ENCODE measurements at regions of chr6 and their contacts with region 1.

Region 1: GRCh38 chr6:106787327-106788196 is 158.2 kb downstream of the QRSL1 start:
- DNase-seq: no peak
- H3K4me3 ChIP-seq: no peak overlapping the region
- H3K27ac ChIP-seq: no peak overlapping the region
- H3K4me1 ChIP-seq: peaks cover 0 to 4% of the 10 kb centered on the region in 2 donors
- H3K27me3 ChIP-seq: no peaks in the 10 kb centered on the region
- CTCF ChIP-seq: no peak
- POLR2A ChIP-seq: no peak

Region 2: DNA sequence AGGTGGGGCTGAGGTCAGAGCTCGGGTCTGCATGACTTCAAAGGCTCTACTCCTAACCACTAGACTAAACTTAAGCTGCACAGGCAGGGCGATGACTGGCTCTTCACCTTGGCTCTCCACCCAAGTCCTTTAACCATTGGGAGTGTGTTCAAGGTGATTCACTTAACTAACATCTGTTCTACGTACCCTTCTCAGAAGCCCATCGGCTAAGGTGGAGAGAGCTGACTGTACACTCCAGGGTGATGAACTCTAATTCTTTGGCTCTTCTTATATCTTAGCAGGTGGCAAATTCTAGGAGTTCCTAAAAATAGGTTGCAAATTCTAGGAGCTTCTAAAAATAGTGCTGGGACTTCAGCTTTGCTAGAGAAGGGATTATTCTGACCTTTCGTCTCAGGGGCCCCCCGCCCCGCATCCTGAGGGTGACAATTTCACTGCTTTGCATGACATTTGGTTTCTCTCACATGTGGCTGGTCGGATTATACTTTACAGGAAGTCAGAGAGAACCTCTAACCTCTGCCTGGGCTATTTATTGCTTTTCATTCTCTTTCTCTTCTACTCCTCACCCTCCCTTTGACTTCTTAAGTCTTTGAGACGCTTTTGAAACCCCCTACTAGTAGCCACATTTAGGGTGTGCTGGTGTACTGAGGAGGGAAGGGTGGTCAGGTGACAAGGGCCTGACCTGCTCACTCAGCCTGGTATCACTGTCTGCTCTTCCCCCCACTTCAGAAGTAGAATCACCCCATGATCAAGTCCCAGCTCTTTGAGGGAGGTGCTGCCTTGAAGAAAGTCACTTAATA is 645.9 kb before region 1 on chr6:
- intact Hi-C with region 1: no loop called
- DNase-seq: no peak
- H3K4me3 ChIP-seq: no peak overlapping the region
- H3K27ac ChIP-seq: no peak overlapping the region
- H3K4me1 ChIP-seq: no peaks in the 10 kb centered on the region
- H3K27me3 ChIP-seq: no peaks in the 10 kb centered on the region
- CTCF ChIP-seq: no peak
- POLR2A ChIP-seq: no peak

Region 3: DNA sequence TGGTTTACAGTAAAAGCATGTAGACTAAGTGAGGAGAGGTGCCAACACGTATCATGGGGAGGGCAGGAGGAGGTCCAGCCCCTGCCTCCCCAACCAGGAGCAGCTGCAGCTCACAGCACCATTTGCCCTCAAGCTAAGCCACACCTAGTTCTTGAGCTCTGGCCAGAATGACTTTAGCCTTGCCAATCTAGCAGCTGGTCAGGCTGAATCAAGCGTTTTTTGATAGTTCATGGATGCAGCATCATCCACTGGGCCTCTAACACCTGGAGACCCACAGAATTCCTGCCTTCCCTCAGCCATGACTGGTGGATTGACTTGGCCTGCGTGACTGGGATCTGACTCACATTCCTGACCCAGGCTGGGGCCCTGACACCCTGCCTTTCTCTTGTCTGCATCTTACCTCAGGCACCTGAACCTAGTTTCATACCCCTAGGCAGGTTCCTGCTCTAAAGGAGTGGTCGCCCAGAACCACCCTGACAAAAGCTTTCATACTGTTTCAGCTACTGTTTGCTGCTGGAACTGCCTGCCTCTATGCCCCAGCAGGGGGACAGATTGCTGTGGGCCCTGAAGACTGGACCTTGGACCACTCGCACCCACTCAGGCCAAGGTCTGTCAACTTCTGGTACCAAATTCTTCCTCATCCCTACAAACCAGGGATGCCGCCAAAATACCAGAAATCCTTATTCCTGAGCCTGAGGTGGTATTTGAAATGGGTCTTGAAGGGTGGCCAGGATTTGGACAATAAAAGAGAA is 35.9 kb before region 1 on chr6:
- intact Hi-C with region 1: loop called (anchors 2 kb)
- DNase-seq: no peak
- H3K4me3 ChIP-seq: no peak overlapping the region
- H3K27ac ChIP-seq: no peak overlapping the region
- H3K4me1 ChIP-seq: no peaks in the 10 kb centered on the region
- H3K27me3 ChIP-seq: no peaks in the 10 kb centered on the region
- CTCF ChIP-seq: no peak
- POLR2A ChIP-seq: no peak

Measured in breast epithelium (tissue), 4 donors.